Activated T-helper 2 cell treated with anti-CD3 and anti-CD28 coated beads, Interferon-gamma antibody, Interleukin-2, Interleukin-4, amounts not matched to agents 10 μg/mL and 5 μg/mL and 100 μg/mL, durations not matched to agents 14 hours and 24 hours and 36 hours (primary cell): ENCODE measurements at regions of chr7 and their contacts with region 1.

Region 1: DNA sequence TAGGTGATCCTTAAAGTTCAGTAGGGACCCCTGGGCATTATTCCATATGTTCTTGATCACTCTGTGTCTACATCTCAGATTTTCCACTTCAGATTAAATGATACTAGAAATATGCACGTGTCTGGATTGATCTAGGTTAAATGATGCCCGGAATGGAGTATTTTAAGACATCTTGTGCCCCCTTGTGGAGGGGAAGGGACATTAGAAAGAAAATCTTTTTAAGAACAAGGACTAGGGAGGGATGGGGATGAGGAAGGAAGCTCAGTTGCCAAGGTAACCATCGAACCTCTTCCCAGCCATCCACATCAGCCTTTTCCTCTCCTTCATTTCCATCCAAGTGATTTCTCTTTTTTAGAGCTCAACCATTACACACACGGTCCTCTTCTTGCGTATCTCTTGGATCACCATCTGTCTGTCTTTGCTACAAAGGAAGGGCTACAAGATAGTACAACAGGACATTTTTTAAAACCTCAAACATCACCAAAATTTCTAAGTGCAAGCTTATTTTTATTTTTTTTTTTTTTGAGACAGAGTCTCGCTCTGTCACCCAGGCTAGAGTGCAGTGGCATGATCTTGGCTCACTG is 40.5 kb downstream of the PRSS2 start:
- DNase-seq: no peak
- H3K4me3 Mint-ChIP-seq: peak overlapping the region; percentile 76
- H3K27ac Mint-ChIP-seq: peak overlapping the region; percentile 92
- H3K4me1 Mint-ChIP-seq: peaks cover 68% of the 10 kb centered on the region
- H3K27me3 Mint-ChIP-seq: peaks cover 7% of the 10 kb centered on the region

Region 2: DNA sequence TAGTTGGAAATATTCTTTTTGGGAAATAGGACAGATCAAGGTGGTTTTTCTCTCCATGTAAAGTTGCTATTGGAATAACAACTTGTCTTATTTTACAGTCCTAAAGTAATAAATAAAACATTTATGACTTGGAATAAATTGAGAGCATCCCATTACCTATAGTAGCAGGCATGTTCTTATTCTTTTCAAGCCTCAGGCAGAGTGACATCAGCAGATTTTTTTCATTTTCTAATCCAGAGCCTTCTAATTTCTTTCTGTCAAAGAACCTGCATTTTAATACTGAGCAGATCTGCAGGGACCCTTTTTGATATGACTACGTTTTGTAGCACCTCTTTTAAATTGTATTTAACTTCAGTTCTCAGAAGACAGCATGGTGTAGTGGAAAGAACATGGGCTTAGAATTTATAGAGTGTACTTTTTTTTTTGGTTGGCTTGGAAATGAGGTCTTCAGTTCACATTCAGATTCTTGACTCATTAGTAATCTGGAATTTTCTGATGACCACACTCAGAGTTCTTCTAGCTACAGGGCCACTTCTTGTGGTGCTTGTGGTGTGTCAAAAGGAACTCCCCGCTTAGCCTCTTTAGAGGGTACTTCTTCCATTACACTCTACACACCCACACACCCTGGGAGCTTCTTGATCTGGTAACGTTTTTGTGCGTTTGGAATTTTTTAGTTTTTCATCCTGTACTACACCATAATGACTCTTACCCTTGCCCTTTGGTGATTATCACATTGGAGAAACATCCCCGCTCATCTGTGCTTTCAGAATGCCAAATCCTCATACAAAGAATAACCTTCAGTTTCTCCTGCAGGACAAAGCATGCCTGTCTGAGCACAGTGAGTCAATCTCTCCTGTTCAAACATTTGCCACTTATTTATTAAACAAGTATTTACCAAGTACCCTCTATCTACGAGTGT is 1225.4 kb before region 1 on chr7:
- intact Hi-C with region 1: loop called (anchors 5 kb)
- DNase-seq: no peak
- H3K4me3 Mint-ChIP-seq: peak overlapping the region; percentile 30
- H3K27ac Mint-ChIP-seq: peak overlapping the region; percentile 87
- H3K4me1 Mint-ChIP-seq: peaks cover 58% of the 10 kb centered on the region
- H3K27me3 Mint-ChIP-seq: no peaks in the 10 kb centered on the region

Region 3: GRCh38 chr7:142323706-142324105 is 487.5 kb before region 1 on chr7:
- intact Hi-C with region 1: loop called (anchors 1 kb)
- DNase-seq: no peak
- H3K4me3 Mint-ChIP-seq: no peak overlapping the region
- H3K27ac Mint-ChIP-seq: no peak overlapping the region
- H3K4me1 Mint-ChIP-seq: peaks cover 4% of the 10 kb centered on the region
- H3K27me3 Mint-ChIP-seq: peaks cover 18% of the 10 kb centered on the region

Region 4: DNA sequence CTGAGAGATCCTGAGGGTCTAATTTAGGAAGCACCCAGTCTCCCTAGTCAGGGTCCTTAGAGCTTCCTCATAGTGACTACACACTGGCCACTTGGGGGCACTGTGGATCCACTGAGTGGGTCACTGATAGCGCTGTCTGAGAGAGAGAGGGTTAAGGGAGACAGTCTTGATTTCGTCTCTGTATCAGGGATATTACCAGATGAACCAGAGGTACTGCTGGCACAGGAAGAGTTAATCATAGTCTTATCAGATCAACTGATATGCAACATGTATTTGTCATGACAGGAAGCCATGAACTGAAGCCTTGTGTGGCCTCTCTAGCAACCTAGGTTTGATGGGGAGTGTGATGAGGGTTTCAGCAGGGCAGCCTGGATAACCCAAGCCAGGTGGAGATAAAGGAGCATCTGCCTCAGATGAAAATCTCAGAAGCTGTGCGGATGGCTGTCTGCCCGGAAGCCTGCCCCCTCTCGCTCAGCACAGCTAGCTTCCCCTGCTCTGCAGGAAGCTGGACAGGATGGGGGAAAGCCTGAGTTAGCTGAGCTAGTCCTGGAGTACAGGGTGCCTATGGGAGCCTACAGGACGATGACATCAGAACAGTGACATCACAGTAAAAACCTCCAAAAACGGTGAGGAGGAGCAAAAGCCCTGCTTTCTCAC is 276.0 kb before region 1 on chr7:
- intact Hi-C with region 1: loop called (anchors 1 kb)
- DNase-seq: peak; percentile 70
- H3K4me3 Mint-ChIP-seq: peak overlapping the region; percentile 28
- H3K27ac Mint-ChIP-seq: peak overlapping the region; percentile 82
- H3K4me1 Mint-ChIP-seq: peaks cover 26% of the 10 kb centered on the region
- H3K27me3 Mint-ChIP-seq: peaks cover 3% of the 10 kb centered on the region

Region 5: GRCh38 chr7:142669074-142669654 is 142.1 kb before region 1 on chr7:
- intact Hi-C with region 1: loop called (anchors 1 kb)
- DNase-seq: no peak
- H3K4me3 Mint-ChIP-seq: no peak overlapping the region
- H3K27ac Mint-ChIP-seq: no peak overlapping the region
- H3K4me1 Mint-ChIP-seq: peaks cover 26% of the 10 kb centered on the region
- H3K27me3 Mint-ChIP-seq: no peaks in the 10 kb centered on the region

Region 6: DNA sequence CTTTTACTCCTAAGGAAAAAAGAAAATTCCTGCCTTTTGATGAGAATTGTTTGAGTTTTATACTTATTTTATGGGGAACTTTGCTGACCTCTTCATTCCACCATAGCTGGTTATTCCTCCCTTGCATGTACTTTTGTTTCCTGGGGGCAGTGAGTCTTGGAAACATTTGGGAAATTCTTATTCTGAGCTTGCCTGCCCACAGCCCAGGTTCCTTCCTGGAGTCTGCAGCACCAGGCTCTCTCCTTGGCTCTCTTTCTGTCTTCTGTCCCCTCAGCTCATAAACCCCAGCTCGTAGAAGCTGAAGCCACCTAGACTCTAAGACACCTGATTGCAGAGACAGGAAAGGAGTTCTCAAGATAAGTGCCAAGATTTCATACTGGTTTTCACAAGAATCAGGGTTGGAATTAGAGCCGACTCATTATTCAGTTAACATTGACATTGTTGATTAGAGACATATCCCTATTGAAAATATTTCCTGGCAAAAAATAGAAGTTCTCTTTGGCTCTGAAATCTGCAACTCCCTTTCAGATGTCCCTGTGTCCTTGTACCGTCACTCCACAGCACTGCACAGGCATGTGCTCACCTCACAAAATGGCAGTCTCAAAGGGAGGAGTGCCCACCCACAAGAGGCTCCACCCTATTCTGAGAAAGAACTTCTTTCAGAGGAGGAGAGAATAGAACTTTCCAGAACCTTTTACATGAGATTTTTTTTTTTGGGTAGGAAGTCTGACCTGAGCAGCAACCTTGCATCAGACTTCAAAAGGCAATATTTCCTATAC is 129.7 kb before region 1 on chr7:
- intact Hi-C with region 1: no loop called
- DNase-seq: no peak
- H3K4me3 Mint-ChIP-seq: no peak overlapping the region
- H3K27ac Mint-ChIP-seq: no peak overlapping the region
- H3K4me1 Mint-ChIP-seq: peaks cover 7% of the 10 kb centered on the region
- H3K27me3 Mint-ChIP-seq: peaks cover 2% of the 10 kb centered on the region

Region 7: GRCh38 chr7:142796608-142797385 is 14.4 kb before region 1 on chr7:
- intact Hi-C with region 1: loop called (anchors 1 kb)
- DNase-seq: no peak
- H3K4me3 Mint-ChIP-seq: peak overlapping the region; percentile 95
- H3K27ac Mint-ChIP-seq: peak overlapping the region; percentile 99
- H3K4me1 Mint-ChIP-seq: peaks cover 64% of the 10 kb centered on the region
- H3K27me3 Mint-ChIP-seq: no peaks in the 10 kb centered on the region

Region 8: DNA sequence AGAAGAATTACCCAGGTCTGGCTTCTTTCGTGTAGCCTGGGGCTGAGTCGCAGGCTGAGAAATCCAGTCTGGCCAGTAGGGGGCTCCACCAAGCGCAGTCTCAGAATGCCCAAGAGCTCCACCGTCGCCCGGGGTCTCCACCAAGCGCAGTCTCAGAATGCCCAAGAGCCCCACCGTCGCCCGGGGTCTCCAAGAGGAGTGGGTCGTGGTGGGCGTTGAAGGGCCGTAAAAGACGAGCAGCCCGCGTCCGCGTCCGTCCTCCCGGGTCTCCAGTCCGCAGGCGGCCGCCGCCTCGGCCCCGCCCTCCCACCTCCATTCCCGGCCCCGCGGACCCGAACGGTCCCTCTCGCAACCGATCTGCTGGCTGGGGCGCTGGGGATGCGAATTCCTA is 569.0 kb after region 1 on chr7:
- intact Hi-C with region 1: loop called (anchors 2 kb)
- DNase-seq: peak; percentile 81
- H3K4me3 Mint-ChIP-seq: peak overlapping the region; percentile 85
- H3K27ac Mint-ChIP-seq: peak overlapping the region; percentile 89
- H3K4me1 Mint-ChIP-seq: peaks cover 50% of the 10 kb centered on the region
- H3K27me3 Mint-ChIP-seq: no peaks in the 10 kb centered on the region